Naive thymus-derived CD4-positive, alpha-beta T cell (primary cell): ENCODE measurements at regions of chr16 and their contacts with region 1.

Region 1: DNA sequence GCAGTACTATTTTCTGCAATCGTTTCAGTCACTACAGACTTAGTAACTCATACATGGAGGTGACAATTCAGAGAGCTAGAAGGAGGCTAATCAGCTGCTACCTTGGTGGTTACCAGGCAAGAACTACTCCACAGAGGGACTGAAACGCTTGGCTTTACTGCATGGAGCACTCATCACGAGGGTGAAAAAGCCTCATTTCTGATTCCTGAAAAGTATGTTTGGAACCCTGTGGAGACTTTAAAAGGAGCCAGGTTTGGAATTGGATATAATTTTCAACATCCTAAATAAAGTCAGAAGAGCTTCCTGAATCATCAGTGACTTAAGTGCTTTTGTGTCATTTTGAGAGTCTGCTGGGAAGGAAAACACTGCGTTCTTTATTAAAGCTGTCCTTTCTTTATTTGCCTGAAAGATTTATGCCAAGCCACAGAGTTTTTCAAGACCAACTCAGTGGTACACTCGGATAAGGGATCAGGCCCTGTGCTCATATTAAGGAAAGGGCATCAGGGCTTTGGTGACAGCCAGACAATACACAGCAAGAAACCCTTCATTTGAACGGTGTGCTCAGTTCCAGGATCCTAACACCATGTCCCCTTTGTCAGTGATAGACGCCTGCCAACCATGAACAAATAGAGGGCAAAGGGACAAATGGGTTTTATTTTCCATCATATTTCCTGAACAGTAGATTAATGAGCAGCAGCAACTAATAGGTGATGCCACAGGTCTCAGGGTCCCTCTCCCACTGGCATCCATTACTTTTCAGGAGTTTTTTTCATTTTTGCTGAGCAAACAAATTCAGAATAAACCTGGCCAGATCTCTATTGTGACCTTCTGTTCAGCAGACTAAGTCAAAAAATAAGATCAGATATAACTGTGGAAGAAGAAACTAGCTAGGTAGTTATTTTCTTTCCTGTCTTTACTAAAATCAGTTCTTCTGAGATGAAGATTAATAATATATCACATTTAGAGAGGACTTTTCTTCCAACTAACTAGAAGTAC is 80.5 kb upstream of the CLEC18B start:
- DNase-seq: no peak
- ATAC-seq: no peak
- H3K4me3 ChIP-seq: no peak overlapping the region
- H3K4me3 Mint-ChIP-seq: no peak overlapping the region
- H3K27ac ChIP-seq: no peak overlapping the region
- H3K27ac Mint-ChIP-seq: peak overlapping the region in 8 of 9 donors; percentile 23 to 65 (median 59)
- H3K4me1 ChIP-seq: no peaks in the 10 kb centered on the region
- H3K4me1 Mint-ChIP-seq: peaks cover 0 to 37% (median 29%) of the 10 kb centered on the region in 7 donors
- H3K27me3 ChIP-seq: no peaks in the 10 kb centered on the region
- H3K27me3 Mint-ChIP-seq: no peaks in the 10 kb centered on the region

Region 2: GRCh38 chr16:74623214-74623842 is 121.5 kb after region 1 on chr16:
- CTCF ChIA-PET with region 1: interaction called, 8 read pairs
- POLR2A ChIA-PET with region 1: no interaction called
- intact Hi-C with region 1: loop called in 1 of 2 experiments (anchors 2 kb)
- DNase-seq: peak in 6 of 9 donors; percentile 29 to 59 (median 53)
- ATAC-seq: peak; percentile 78
- H3K4me3 ChIP-seq: no peak overlapping the region
- H3K4me3 Mint-ChIP-seq: no peak overlapping the region
- H3K27ac ChIP-seq: no peak overlapping the region
- H3K27ac Mint-ChIP-seq: peak overlapping the region in 5 of 9 donors; percentile 20 to 78 (median 49)
- H3K4me1 ChIP-seq: no peaks in the 10 kb centered on the region
- H3K4me1 Mint-ChIP-seq: peaks cover 5 to 18% (median 9%) of the 10 kb centered on the region in 7 donors
- H3K27me3 ChIP-seq: no peaks in the 10 kb centered on the region
- H3K27me3 Mint-ChIP-seq: no peaks in the 10 kb centered on the region

Region 3: GRCh38 chr16:74740795-74741304 is 239.1 kb after region 1 on chr16:
- CTCF ChIA-PET with region 1: no interaction called
- POLR2A ChIA-PET with region 1: no interaction called
- intact Hi-C with region 1: no loop called
- DNase-seq: no peak
- ATAC-seq: no peak
- H3K4me3 ChIP-seq: no peak overlapping the region
- H3K4me3 Mint-ChIP-seq: no peak overlapping the region
- H3K27ac ChIP-seq: no peak overlapping the region
- H3K27ac Mint-ChIP-seq: no peak overlapping the region
- H3K4me1 ChIP-seq: no peaks in the 10 kb centered on the region
- H3K4me1 Mint-ChIP-seq: peaks cover 0 to 4% (median 0%) of the 10 kb centered on the region in 7 donors
- H3K27me3 ChIP-seq: no peaks in the 10 kb centered on the region
- H3K27me3 Mint-ChIP-seq: peaks cover 0 to 7% (median 0%) of the 10 kb centered on the region in 5 donors